Endothelial cell of umbilical vein (primary cell): ENCODE measurements at regions of chrX and their contacts with region 1.

Region 1: DNA sequence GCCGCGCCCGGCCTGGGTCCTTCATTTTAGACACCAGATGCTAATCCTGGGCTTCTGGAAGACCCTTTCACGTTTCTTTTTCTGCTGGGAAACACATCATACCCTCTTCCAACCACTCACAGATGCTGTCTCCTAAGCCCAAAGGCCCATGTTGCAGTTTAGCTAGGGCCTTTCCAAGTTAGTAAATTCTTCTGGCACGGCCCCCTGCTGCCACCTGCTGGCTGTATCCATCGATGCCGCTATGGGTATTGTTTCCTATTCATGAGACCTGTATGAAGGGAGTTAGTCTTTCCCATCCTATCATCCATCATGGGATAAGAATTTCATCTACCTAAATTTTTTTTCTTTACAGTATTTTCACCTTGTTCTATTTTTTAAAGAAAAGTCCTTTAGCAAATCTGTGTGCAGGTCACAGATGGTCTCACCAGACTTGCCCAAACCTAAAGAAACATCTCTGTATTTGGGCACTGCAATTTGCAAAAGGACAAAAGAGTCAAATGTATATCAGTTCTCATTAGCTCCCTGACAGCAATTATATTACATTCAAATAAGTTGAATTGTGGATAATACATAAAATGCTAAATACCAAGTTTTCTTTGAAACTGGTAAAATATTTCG is 37.8 kb upstream of the SLC9A7 start:
- DNase-seq: peak; percentile 67
- H3K4me3 ChIP-seq: no peak overlapping the region
- H3K27ac ChIP-seq: no peak overlapping the region
- H3K4me1 ChIP-seq: peaks cover 15% of the 10 kb centered on the region
- H3K27me3 ChIP-seq: no peaks in the 10 kb centered on the region
- CTCF ChIP-seq: peak; percentile 56 to 65
- POLR2A ChIP-seq: no peak

Region 2: GRCh38 chrX:46386510-46386909 is 410.2 kb before region 1 on chrX:
- CTCF ChIA-PET with region 1: no interaction called
- POLR2A ChIA-PET with region 1: no interaction called
- dilution Hi-C with region 1: no loop called
- intact Hi-C with region 1: no loop called
- DNase-seq: no peak
- H3K4me3 ChIP-seq: no peak overlapping the region
- H3K27ac ChIP-seq: no peak overlapping the region
- H3K4me1 ChIP-seq: no peaks in the 10 kb centered on the region
- H3K27me3 ChIP-seq: no peaks in the 10 kb centered on the region
- CTCF ChIP-seq: peak in 1 of 2 donors; percentile 5
- POLR2A ChIP-seq: no peak

Region 3: GRCh38 chrX:46433892-46434291 is 362.8 kb before region 1 on chrX:
- CTCF ChIA-PET with region 1: no interaction called
- POLR2A ChIA-PET with region 1: no interaction called
- dilution Hi-C with region 1: no loop called
- intact Hi-C with region 1: no loop called
- DNase-seq: no peak
- H3K4me3 ChIP-seq: no peak overlapping the region
- H3K27ac ChIP-seq: no peak overlapping the region
- H3K4me1 ChIP-seq: no peaks in the 10 kb centered on the region
- H3K27me3 ChIP-seq: peaks cover 0 to 2% of the 10 kb centered on the region in 2 experiments
- CTCF ChIP-seq: no peak
- POLR2A ChIP-seq: no peak

Region 4: GRCh38 chrX:46506076-46506475 is 290.6 kb before region 1 on chrX:
- CTCF ChIA-PET with region 1: no interaction called
- POLR2A ChIA-PET with region 1: no interaction called
- dilution Hi-C with region 1: no loop called
- intact Hi-C with region 1: no loop called
- DNase-seq: no peak
- H3K4me3 ChIP-seq: no peak overlapping the region
- H3K27ac ChIP-seq: no peak overlapping the region
- H3K4me1 ChIP-seq: no peaks in the 10 kb centered on the region
- H3K27me3 ChIP-seq: no peaks in the 10 kb centered on the region
- CTCF ChIP-seq: no peak
- POLR2A ChIP-seq: no peak

Region 5: DNA sequence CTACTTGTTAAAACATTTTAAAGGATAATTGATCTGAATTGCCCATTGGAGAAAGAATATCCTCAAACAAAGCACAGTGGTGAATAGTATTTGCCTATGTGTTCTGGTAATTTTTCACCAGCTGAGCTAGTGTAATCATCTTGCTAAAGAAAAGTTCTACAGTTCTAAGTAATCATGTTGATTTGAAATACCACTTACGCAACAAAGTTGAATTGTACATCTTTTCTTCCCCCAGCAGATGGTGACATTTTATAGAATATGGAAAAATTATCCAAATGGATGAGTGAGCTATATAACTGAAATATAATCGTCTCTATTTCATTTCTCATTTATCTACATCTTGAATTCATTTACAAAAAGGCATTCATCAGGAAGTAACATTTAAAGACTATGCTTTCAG is 241.7 kb before region 1 on chrX:
- CTCF ChIA-PET with region 1: interaction called, 18 read pairs
- POLR2A ChIA-PET with region 1: no interaction called
- dilution Hi-C with region 1: no loop called
- intact Hi-C with region 1: no loop called
- DNase-seq: peak; percentile 25
- H3K4me3 ChIP-seq: no peak overlapping the region
- H3K27ac ChIP-seq: no peak overlapping the region
- H3K4me1 ChIP-seq: no peaks in the 10 kb centered on the region
- H3K27me3 ChIP-seq: no peaks in the 10 kb centered on the region
- CTCF ChIP-seq: no peak
- POLR2A ChIP-seq: no peak

Region 6: DNA sequence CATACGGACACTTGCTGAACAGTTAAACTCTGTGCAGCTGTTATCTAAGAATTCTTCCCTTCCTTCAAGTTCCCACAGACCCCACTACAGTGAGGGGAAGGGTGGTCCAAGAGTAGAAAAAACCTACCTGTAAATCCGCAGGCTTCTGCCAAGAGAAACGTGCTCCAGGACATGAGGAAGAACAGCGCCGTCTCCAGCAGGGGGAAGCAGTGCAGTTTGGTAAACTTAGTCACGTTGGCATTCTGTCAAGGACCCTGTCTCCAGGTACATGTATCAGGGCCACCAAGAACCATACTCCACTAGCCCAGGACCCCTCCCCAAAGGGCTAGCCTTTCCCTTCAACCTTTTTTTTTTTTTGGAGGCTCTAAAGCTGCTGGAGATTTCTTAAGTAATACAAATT is 143.2 kb before region 1 on chrX:
- CTCF ChIA-PET with region 1: interaction called, 9 read pairs
- POLR2A ChIA-PET with region 1: no interaction called
- dilution Hi-C with region 1: no loop called
- intact Hi-C with region 1: loop called (anchors 1 kb)
- DNase-seq: peak; percentile 40
- H3K4me3 ChIP-seq: no peak overlapping the region
- H3K27ac ChIP-seq: no peak overlapping the region
- H3K4me1 ChIP-seq: peaks cover 12% of the 10 kb centered on the region
- H3K27me3 ChIP-seq: no peaks in the 10 kb centered on the region
- CTCF ChIP-seq: peak; percentile 24 to 40
- POLR2A ChIP-seq: no peak

Region 7: GRCh38 chrX:46758906-46759644 is 37.6 kb before region 1 on chrX and contains the start of gene SLC9A7:
- CTCF ChIA-PET with region 1: interaction called, 70 read pairs
- POLR2A ChIA-PET with region 1: no interaction called
- dilution Hi-C with region 1: no loop called
- intact Hi-C with region 1: loop called (anchors 1 kb)
- DNase-seq: peak; percentile 73
- H3K4me3 ChIP-seq: peak within 1 kb of the TSS; percentile 53 to 60 (median 54)
- H3K27ac ChIP-seq: no peak within 1 kb of the TSS
- H3K4me1 ChIP-seq: peaks cover 13% of the 10 kb centered on the region
- H3K27me3 ChIP-seq: no peaks in the 10 kb centered on the region
- CTCF ChIP-seq: peak; percentile 73 to 85
- POLR2A ChIP-seq: no peak
- total RNA-seq, gene SLC9A7: 7.5 and 10.4 TPM in 2 replicates

Region 8: DNA sequence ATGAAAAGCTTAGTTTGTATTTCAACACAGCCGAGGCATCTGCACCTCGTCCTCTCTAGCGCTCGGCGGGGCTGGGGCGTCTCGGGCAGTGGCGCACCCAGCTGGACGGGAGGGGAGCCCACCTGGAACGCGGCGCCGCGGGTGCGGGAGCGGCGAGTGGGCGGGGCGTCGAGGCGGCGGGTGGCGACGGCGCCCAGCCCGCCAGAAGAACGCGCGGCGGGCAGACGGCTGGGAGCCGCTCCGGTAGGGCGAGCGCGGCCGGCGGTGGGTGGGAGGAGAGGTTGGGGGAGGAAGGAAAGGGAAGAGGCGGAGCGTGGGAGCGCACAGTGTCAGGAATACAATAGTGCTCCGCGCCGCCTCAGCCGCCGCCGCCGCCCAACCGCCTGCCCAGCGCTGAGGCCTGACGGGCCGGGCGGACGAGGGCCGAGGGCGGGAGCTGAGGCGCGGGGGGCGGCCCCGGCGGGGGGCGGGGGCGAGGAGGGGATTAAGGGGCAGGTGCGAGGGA is 115.5 kb after region 1 on chrX and contains the start of gene JADE3:
- CTCF ChIA-PET with region 1: no interaction called
- POLR2A ChIA-PET with region 1: no interaction called
- dilution Hi-C with region 1: no loop called
- intact Hi-C with region 1: no loop called
- DNase-seq: peak; percentile 75
- H3K4me3 ChIP-seq: peak within 1 kb of the TSS; percentile 72 to 79 (median 75)
- H3K27ac ChIP-seq: peak within 1 kb of the TSS; percentile 45
- H3K4me1 ChIP-seq: peaks cover 11% of the 10 kb centered on the region
- H3K27me3 ChIP-seq: no peaks in the 10 kb centered on the region
- CTCF ChIP-seq: no peak
- POLR2A ChIP-seq: no peak
- total RNA-seq, gene JADE3: 16.3 and 18.4 TPM in 2 replicates

Region 9: DNA sequence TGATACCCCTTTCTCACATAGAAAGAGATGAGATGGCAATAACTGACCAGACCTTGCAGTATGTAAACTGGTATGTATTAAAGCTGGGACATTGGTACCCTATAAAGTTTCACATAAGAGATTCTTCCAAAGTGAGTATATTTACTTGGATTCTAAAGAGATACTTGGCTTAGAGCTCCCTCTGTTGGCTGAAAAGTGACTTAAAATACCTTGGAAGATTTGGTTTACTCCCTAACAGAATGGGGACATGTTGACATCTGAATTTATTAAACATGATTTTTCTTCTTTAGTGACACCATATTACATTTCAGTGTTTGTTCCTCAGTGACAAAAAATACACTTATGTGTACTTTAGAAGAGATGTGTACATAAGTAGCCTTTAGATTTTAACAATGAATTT is 233.7 kb after region 1 on chrX:
- CTCF ChIA-PET with region 1: interaction called, 11 read pairs
- POLR2A ChIA-PET with region 1: no interaction called
- dilution Hi-C with region 1: no loop called
- intact Hi-C with region 1: loop called (anchors 1 kb)
- DNase-seq: peak; percentile 69
- H3K4me3 ChIP-seq: no peak overlapping the region
- H3K27ac ChIP-seq: no peak overlapping the region
- H3K4me1 ChIP-seq: no peaks in the 10 kb centered on the region
- H3K27me3 ChIP-seq: no peaks in the 10 kb centered on the region
- CTCF ChIP-seq: peak; percentile 19 to 26
- POLR2A ChIP-seq: no peak